ENCODE measurements at regions of chr1 and their contacts with region 1.

Region 1: DNA sequence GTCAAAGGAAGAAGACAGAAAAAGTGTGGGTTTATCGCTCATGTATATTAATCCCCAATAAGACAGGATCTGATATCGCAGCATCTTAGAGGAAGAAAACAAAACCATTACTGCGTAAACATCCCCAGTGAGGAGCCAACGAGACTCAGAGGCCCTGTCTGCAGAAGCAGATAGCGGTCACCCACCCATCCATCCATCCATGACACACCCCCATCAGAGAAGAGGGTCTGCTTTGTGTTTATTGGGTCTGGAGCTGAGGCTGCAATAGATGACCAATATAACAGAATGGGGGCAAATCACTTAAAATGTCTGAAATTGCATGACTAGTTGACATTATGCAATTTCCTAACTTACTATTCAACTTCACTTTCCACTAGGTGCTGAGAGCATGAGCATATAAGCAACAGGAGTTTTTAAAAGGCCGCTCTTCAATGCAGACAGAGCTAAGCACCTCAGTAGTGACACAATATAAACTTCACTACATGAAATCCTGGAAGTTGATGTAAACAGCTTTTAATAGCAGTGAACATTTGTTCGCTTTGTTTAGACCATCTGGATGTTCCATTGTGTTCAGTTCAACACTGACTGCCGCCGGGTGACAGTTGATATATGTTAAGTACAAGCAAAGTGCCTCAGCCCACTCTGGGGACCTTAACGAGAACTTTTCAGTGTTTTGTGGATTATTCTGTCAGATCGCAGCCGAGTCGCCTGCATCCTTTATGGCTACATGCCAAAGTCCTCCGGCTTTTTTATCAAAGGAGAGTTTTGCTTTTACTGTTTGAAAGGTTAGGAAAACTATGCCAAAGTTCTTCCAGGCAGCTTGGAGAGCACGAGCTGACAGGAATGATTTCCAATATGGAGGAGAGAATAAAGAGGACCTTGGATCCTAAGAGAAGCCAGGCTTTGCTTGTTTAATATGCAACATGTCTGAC is 167.5 kb downstream of the ZNF281 start:
- DNase-seq: peak in 1 of 2 donors; percentile 32
- ATAC-seq: peak in 7 of 8 donors; percentile 61 to 94 (median 82)
- H3K4me3 ChIP-seq: peak overlapping the region in 7 of 10 donors; percentile 4 to 30 (median 21)
- H3K27ac ChIP-seq: peak overlapping the region in 9 of 10 donors; percentile 29 to 80 (median 57)
- H3K4me1 ChIP-seq: peaks cover 3 to 32% (median 15%) of the 10 kb centered on the region in 9 donors
- H3K27me3 ChIP-seq: peaks cover 0 to 11% (median 0%) of the 10 kb centered on the region in 7 donors
- CTCF ChIP-seq: no peak

Region 2: DNA sequence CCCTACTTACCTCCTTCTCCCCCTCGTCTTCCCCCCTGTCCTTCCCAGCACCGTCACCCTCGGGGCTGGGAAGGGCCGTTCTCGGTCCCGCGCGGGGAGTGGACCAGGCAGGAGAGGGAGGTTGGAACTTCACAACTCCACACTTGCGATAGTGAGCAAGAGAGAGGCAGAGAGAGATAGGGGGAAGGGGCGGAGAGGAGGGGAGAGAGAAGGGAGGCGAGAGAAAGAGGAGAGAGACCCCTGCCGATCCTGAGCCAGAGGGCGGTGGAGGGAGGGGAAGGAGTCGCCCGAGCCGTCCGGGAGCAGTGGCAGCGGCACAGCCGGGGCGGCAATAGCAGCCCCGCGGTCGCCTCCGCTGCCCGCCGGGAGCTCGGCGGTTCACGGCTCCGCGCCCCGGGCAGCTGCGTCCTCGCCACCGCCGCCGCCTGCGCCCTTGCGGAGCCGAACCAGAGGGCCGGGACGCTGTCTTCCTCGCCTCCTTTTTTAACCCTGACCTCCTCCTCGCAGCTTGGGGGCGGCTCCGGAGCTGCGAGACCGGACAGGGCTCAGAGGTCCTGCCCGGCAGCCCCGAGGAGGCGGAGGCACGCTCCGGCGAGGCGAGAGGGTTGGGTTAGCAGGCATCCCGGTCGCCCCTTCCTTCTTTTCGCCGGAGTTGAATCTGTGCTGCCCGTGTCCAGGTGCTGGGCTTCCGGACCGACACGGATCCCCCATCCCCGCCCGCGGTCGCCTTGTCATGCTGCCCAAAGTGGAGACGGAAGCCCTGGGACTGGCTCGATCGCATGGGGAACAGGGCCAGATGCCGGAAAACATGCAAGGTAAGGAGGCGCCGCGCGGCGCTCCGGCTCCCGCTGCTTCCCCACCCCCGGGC is 203.2 kb before region 1 on chr1:
- intact Hi-C with region 1: loop called in 1 of 10 experiments (anchors 10 kb)
- DNase-seq: peak in 1 of 2 donors; percentile 35
- ATAC-seq: peak; percentile 24 to 63 (median 50)
- H3K4me3 ChIP-seq: peak overlapping the region; percentile 29 to 64 (median 56)
- H3K27ac ChIP-seq: peak overlapping the region in 9 of 10 donors; percentile 13 to 80 (median 52)
- H3K4me1 ChIP-seq: peaks cover 0 to 75% (median 61%) of the 10 kb centered on the region in 9 donors
- H3K27me3 ChIP-seq: peaks cover 31 to 100% (median 100%) of the 10 kb centered on the region in 7 donors
- CTCF ChIP-seq: no peak

Region 3: GRCh38 chr1:200128944-200129885 is 113.2 kb before region 1 on chr1:
- intact Hi-C with region 1: no loop called
- DNase-seq: no peak
- ATAC-seq: no peak
- H3K4me3 ChIP-seq: no peak overlapping the region
- H3K27ac ChIP-seq: no peak overlapping the region
- H3K4me1 ChIP-seq: peaks cover 0 to 7% (median 0%) of the 10 kb centered on the region in 9 donors
- H3K27me3 ChIP-seq: no peaks in the 10 kb centered on the region
- CTCF ChIP-seq: no peak

Region 4: DNA sequence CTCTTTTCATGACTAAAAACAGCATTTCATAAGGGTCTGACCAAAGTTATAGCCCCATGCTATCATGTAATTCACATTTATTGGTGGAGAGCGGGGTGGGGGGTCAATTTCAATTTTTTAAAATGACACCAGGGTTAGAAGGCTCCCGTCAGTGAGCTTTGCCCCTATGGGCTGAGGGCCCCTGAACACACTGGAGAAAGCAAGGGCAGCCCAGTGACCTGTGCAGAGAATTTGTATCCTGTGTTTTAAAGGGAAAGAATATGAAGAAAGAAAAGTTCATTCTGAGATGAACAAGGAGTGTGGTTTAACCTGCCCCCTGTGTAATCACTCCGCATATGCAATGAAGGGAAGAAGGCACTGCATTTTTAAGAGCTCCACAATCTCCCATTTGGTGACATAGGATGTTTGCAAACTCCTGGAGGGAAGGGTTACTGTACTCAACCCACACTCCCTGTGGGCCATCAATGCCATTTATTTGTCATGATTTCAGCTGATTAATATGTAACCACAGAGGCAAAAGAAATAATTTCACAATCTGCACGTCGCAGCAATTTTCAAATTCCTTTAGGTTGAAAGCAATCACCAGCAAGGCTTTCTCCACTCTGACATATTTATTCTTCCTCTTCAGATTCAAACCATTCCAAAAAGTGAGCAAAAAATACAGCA is 71.8 kb after region 1 on chr1:
- intact Hi-C with region 1: no loop called
- DNase-seq: no peak
- ATAC-seq: no peak
- H3K4me3 ChIP-seq: no peak overlapping the region
- H3K27ac ChIP-seq: no peak overlapping the region
- H3K4me1 ChIP-seq: no peaks in the 10 kb centered on the region
- H3K27me3 ChIP-seq: peaks cover 0 to 21% (median 5%) of the 10 kb centered on the region in 7 donors
- CTCF ChIP-seq: no peak